PC-3 (cell line): ENCODE measurements at regions of chr13 and their contacts with region 1.

Region 1: GRCh38 chr13:89925107-89925506 is 1422.4 kb upstream of the MIR17HG start:
- DNase-seq: peak; percentile 53
- ATAC-seq: peak; percentile 80
- H3K4me3 ChIP-seq: no peak overlapping the region
- H3K27ac ChIP-seq: no peak overlapping the region
- H3K4me1 ChIP-seq: no peaks in the 10 kb centered on the region; the same call in 1 of the 2 replicates
- H3K27me3 ChIP-seq: no peaks in the 10 kb centered on the region
- CTCF ChIP-seq: peak; percentile 79

Region 2: GRCh38 chr13:89361909-89362308 is 563.2 kb before region 1 on chr13:
- CTCF ChIA-PET with region 1: no interaction called
- POLR2A ChIA-PET with region 1: no interaction called
- intact Hi-C with region 1: loop called (anchors 10 kb)
- DNase-seq: peak; percentile 41
- ATAC-seq: no peak; the same call in 1 of the 2 replicates
- H3K4me3 ChIP-seq: no peak overlapping the region
- H3K27ac ChIP-seq: no peak overlapping the region
- H3K4me1 ChIP-seq: no peaks in the 10 kb centered on the region
- H3K27me3 ChIP-seq: no peaks in the 10 kb centered on the region
- CTCF ChIP-seq: peak; percentile 53

Region 3: DNA sequence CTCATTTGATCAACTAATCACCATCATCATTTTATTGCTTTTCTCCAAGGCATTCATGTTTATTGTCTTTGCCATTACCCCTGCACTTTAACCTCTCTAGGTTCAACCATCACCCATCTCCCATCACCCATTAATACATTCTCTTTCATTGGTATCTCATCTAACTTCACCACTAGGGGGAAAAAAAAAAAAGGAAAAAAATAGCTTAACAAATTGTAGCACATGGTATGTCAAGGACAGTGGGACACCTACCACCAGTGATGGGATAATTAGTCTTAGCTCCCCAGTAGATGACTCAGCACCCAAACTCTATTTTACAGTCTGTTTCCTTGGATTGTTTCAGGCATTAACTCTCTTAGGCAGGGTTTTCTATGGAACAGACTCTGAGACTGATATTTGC is 347.8 kb before region 1 on chr13:
- CTCF ChIA-PET with region 1: no interaction called
- POLR2A ChIA-PET with region 1: no interaction called
- intact Hi-C with region 1: loop called (anchors 5 kb)
- DNase-seq: peak; percentile 1
- ATAC-seq: no peak
- H3K4me3 ChIP-seq: no peak overlapping the region
- H3K27ac ChIP-seq: no peak overlapping the region
- H3K4me1 ChIP-seq: no peaks in the 10 kb centered on the region
- H3K27me3 ChIP-seq: no peaks in the 10 kb centered on the region
- CTCF ChIP-seq: no peak; the same call in 1 of the 2 replicates

Region 4: GRCh38 chr13:89726690-89727435 is 198.2 kb before region 1 on chr13:
- CTCF ChIA-PET with region 1: interaction called, 3 read pairs
- POLR2A ChIA-PET with region 1: no interaction called
- intact Hi-C with region 1: loop called (anchors 10 kb)
- DNase-seq: peak; percentile 87
- ATAC-seq: peak; percentile 91
- H3K4me3 ChIP-seq: no peak overlapping the region
- H3K27ac ChIP-seq: peak overlapping the region; percentile 100
- H3K4me1 ChIP-seq: peaks cover 21% of the 10 kb centered on the region
- H3K27me3 ChIP-seq: no peaks in the 10 kb centered on the region
- CTCF ChIP-seq: no peak